Right ventricle myocardium inferior (tissue), 1 donor: ENCODE measurements at regions of chr9 and their contacts with region 1.

Region 1: GRCh38 chr9:126317513-126317912 is 9.1 kb upstream of the MVB12B start:
- DNase-seq: no peak
- ATAC-seq: no peak

Region 2: DNA sequence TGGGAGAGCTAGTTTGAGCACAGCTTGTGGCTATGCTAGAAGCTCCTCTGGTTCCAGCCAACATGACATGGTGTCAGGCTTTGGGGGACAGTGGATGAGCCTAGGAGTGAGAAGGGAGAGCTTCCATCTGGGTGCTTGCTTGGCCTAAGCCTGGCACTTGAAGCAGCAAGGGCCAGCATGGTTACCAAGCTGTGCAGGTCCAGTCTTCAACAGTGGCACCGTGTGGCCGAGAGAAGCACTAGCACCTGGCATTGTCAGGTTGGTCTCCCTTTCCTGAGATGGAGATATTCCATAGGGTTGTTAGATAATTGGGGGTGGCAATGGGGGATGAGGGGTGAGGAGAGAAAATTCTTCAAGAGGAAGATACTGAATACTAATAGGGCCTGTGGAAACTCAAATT is 308.5 kb before region 1 on chr9:
- intact Hi-C with region 1: no loop called
- DNase-seq: no peak
- ATAC-seq: no peak

Region 3: GRCh38 chr9:126398403-126399058 is 81.0 kb after region 1 on chr9:
- intact Hi-C with region 1: loop called (anchors 2 kb)
- DNase-seq: peak; percentile 93
- ATAC-seq: peak; percentile 89

Region 4: DNA sequence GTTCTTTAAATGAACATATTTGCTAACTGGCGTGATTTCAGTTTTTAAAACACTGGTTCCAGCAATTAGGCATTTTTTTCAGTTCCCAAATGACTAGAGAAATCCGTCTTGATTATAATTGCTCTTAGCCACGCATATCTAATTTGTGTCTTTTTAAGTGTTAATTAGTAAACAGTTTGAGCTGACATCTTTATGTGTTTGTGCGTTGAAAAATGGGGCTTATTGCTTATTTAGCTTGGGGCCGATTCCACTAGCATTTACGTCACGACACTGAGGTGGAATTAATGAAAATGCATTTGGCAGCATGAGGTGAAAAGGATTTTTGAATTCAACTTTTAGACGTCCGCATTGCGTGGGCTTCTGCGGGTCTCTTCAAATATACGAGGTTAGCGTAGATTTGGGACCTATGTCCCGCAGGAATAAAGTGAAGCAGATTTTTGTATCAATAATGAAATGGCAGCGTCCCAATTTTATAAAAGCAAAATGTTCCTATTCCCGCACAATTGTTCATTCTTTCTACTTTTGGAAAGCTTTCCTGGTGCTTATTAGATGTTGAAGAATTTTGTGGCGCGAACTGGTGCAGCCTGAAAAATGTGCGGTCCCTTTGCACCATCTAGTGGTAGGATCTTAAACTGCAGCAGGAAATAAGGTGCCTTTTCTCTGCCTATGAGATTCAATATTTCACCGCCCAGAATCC is 173.5 kb after region 1 on chr9:
- intact Hi-C with region 1: loop called (anchors 5 kb)
- DNase-seq: no peak
- ATAC-seq: peak; percentile 61

Region 5: GRCh38 chr9:126564711-126565110 is 247.2 kb after region 1 on chr9:
- intact Hi-C with region 1: loop called (anchors 10 kb)
- DNase-seq: no peak
- ATAC-seq: peak; percentile 28